ENCODE measurements at regions of chr14 and their contacts with region 1.

Region 1: DNA sequence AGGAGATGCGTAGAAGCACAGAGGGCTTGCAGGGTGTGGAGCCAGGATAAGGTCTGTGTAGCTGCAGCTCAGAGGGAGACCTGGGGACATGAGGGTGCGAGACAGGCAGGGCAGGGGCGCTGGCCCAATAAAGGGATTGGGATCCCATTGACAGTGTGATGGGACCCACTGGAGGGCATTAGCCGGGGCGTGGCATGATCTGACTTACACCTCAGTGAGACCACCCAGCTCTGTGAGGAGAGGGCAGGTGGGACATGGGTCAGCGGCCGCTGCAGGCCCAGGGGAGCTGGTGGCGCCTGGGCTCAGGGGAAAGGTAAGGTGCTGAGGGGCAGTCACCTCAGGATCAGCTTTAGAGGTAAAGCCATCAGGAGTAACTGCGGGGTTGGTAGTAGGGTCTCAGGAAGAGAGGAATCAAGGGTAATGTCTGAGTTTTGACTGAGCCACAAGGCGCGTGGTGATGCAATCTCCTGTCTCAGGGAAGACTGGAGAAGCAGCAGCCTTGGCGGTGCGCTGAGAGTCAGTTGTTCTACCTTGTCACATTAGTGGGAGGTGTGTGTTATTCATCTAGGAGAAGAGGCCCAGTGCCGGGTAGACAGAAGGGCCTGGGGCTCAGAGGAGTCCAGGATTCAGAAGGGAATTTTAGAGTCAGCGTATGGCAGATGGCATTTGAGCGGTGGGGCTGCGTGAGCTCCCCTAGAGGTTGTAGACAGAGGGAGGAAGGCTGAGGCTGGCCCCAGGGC is 30.8 kb upstream of the BDKRB2 start:
- DNase-seq: peak; percentile 69

Region 2: DNA sequence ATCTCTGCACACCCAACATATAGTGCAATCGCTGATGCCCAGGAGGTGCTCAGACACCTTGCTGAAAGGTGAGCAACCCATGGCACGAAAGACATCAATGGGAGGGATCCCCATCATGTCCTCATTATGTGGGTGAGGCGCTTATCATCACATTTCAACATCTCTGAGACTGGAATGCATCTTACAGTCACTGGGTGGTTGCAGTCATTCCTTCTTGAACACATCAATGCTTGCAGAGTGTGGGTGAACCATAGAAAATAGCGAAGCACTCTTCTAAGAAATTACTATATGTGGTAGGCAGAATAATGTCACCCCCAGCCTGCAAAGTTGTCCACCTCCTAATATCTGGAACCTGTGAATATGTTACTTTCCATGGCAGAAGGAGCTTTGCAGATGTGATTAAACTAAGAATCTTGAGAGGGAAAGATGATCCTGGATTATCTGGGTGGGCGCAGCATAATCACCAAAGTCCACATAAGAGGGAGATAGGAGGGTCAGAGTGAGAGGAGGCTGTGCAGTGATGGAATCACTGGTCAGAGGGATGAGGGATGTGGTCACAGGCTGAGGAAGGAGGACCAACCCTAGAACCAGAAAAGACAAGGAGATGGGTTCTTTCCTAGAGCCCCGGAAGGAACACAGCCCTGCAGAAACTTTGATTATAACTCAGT is 587.7 kb before region 1 on chr14:
- intact Hi-C with region 1: loop called in 1 of 2 experiments (anchors 2 kb)
- DNase-seq: no peak